ENCODE measurements at regions of chr10 and their contacts with region 1.

Region 1: DNA sequence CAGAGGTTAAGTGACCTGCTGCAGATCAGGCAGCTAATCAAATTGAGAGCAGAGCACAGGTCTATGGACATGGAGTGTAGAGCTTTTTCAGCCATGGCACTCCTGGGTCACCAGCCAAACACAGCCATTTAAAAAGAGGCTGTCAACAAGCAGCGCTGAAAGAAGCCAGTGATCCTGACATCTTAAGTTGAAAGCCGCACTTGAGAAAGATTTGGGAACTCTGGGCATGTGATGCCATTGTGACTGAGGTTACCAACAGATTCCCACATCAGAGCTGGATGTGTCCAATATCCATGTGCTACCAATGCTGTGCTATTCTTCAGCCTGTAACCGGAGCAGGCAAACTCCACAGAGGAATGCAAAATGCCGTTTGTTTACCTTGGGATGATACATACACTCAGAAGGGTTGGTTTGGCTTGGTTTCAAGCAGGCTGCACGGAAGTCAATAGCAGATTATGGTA is 56.2 kb upstream of the ABLIM1 start:
- DNase-seq: no peak
- ATAC-seq: peak; percentile 85
- H3K4me3 ChIP-seq: no peak overlapping the region
- H3K27ac ChIP-seq: no peak overlapping the region
- H3K4me1 ChIP-seq: peaks cover 21 to 24% of the 10 kb centered on the region in 2 experiments
- H3K27me3 ChIP-seq: no peaks in the 10 kb centered on the region
- CTCF ChIP-seq: no peak
- POLR2A ChIP-seq: no peak
- RAD21 ChIP-seq: no peak

Region 2: GRCh38 chr10:114703377-114704107 is 10.8 kb before region 1 on chr10:
- CTCF ChIA-PET with region 1: interaction called, 16 read pairs
- POLR2A ChIA-PET with region 1: no interaction called
- RAD21 ChIA-PET with region 1: no interaction called
- intact Hi-C with region 1: no loop called
- DNase-seq: no peak
- ATAC-seq: peak; percentile 90
- H3K4me3 ChIP-seq: no peak overlapping the region
- H3K27ac ChIP-seq: no peak overlapping the region
- H3K4me1 ChIP-seq: peaks cover 0 to 4% of the 10 kb centered on the region in 2 experiments; a peak in 2 of 4 replicates
- H3K27me3 ChIP-seq: no peaks in the 10 kb centered on the region
- CTCF ChIP-seq: peak; percentile 84 to 95 (median 88)
- POLR2A ChIP-seq: no peak
- RAD21 ChIP-seq: peak; percentile 90

Region 3: DNA sequence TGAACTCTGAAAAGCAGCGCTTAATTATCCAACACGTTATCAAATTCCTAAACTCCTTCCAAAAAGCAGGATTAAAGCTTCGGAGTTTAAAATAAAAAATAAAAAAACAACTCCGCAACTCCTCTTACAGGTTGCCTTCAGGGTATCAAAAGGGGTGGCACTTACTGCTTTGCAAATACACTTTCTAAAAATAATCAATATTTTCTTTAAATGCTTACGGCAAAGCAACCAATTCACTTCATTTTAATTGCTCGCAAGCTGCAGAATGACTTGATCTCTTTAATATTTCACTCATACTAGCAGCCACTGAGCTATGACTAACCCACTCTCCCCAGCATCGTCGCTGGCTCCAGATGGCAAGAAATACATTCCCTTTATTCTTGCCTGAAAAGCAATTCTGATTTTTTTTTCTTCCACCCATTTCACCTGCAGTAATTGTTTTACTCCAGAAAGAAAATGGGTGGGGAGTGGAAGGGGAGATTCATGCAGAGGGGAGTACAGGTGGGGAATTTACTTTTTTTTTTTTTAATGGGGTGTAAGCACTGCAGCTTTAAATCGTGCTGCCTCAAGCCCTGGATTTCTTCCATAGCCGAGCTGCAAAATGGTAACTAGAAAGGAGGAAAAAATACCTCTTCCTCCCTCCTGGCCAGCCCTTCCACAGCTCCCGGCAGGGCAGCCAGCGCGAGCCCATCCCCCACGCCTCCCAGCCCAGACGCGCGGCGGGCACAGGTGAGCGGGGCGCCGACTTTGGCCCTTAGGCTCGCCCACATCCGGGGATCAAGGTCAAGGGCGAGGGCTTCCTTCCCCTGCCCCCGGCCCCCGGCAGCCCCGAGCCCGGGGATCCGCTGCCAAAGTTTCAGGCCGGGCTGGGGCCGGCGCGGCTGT is 53.0 kb after region 1 on chr10:
- CTCF ChIA-PET with region 1: no interaction called
- POLR2A ChIA-PET with region 1: no interaction called
- RAD21 ChIA-PET with region 1: no interaction called
- intact Hi-C with region 1: loop called (anchors 5 kb)
- DNase-seq: no peak
- ATAC-seq: peak; percentile 82
- H3K4me3 ChIP-seq: peak overlapping the region; percentile 53 to 59
- H3K27ac ChIP-seq: no peak overlapping the region
- H3K4me1 ChIP-seq: peaks cover 8 to 21% of the 10 kb centered on the region in 2 experiments
- H3K27me3 ChIP-seq: no peaks in the 10 kb centered on the region
- CTCF ChIP-seq: no peak
- POLR2A ChIP-seq: no peak
- RAD21 ChIP-seq: no peak

Measured in HCT116 (cell line).